Motor neuron (in vitro differentiated cells): ENCODE measurements at regions of chr12 and their contacts with region 1.

Region 1: GRCh38 chr12:7460375-7461259 is 16.7 kb upstream of the CD163L1 start:
- ATAC-seq: peak; percentile 76 to 92 (median 81)
- H3K4me3 ChIP-seq: no peak overlapping the region
- H3K27ac ChIP-seq: no peak overlapping the region
- H3K4me1 ChIP-seq: no peaks in the 10 kb centered on the region

Region 2: DNA sequence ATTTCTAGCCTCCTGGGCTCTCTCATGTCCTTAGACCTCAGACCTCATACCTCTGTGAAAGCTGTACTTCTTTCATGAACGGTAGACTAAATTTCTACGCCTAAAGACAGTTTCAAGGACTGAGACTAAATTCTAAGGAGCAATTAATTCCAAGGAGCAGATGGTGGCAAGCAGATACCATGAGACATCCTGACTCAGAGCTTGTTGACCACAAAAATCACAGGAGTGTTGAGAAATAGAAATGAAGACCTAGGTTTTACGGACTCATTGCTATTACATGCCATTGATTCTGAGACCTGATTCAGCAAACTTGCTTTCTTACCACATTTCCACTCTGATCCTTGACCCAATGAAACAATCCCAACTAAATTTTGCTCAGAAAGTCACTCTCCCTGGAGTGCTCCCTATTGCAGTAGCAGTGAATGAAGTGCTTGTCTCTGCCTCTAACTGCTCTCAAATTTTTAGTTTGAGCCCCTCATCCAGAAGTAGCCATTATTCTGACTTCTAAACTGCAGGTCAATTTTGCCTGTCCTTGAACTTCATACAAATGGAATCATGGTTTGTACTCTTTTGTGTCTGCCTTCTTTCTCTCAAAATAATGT is 219.1 kb before region 1 on chr12:
- in situ Hi-C with region 1: loop called in 1 of 9 experiments (anchors 25 kb)
- ATAC-seq: no peak
- H3K4me3 ChIP-seq: no peak overlapping the region
- H3K27ac ChIP-seq: no peak overlapping the region
- H3K4me1 ChIP-seq: no peaks in the 10 kb centered on the region